Heart left ventricle (tissue), 16 donors: ENCODE measurements at regions of chr4 and their contacts with region 1.

Region 1: GRCh38 chr4:173990126-173990868 is 293.2 kb downstream of the FBXO8 start:
- DNase-seq: no peak
- ATAC-seq: peak; percentile 71 to 87 (median 83)
- H3K4me3 ChIP-seq: peak overlapping the region in 9 of 12 donors; percentile 2 to 37 (median 21)
- H3K27ac ChIP-seq: peak overlapping the region in 11 of 12 donors; percentile 29 to 75 (median 69)
- H3K4me1 ChIP-seq: peaks cover 0 to 19% (median 5%) of the 10 kb centered on the region in 12 donors
- H3K27me3 ChIP-seq: no peaks in the 10 kb centered on the region
- CTCF ChIP-seq: peak; percentile 28 to 66 (median 50)
- POLR2A ChIP-seq: no peak

Region 2: DNA sequence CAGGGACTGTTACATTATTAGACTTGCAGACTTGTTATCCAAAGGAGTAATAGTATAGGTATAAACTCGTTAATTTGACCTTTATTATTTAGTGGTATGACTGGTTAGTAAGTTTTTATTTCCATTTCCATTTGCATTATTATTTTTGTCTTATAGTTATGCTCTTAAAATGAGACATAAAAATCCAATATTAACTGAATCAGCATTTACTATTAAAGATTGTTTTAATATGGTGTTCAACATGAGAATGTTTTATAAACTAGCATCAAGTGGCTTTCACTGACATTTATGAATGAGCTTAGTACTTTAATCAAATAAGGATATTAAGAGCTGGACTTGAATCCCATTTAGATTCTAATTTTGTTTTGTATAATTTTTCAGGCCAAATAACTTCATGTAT is 232.2 kb before region 1 on chr4:
- intact Hi-C with region 1: loop called in 5 of 10 experiments (anchors 5 to 10 kb)
- DNase-seq: no peak
- ATAC-seq: no peak
- H3K4me3 ChIP-seq: no peak overlapping the region
- H3K27ac ChIP-seq: no peak overlapping the region
- H3K4me1 ChIP-seq: peaks cover 0 to 22% (median 0%) of the 10 kb centered on the region in 12 donors
- H3K27me3 ChIP-seq: no peaks in the 10 kb centered on the region
- CTCF ChIP-seq: no peak
- POLR2A ChIP-seq: no peak

Region 3: DNA sequence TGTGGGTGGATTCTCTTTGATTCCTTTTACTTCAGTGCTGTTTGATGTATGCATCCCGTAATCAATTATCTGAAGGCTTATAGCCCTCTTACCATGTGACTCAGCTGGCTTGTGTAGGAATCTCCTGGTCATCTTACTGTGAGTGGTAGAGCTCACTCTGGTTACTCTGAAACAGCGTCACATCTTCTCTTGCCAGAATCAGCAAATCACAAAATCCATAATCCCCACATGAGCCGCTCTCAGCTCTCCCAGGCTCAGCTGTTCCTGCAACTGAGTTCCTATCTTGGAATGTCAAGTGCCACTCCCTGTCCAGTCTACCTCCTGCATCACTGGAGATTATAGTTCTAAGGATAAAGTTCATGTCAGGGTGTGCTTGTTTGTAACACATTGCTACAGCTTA is 15.1 kb after region 1 on chr4:
- intact Hi-C with region 1: no loop called
- DNase-seq: no peak
- ATAC-seq: peak; percentile 34 to 84 (median 69)
- H3K4me3 ChIP-seq: no peak overlapping the region
- H3K27ac ChIP-seq: no peak overlapping the region
- H3K4me1 ChIP-seq: peaks cover 0 to 8% (median 0%) of the 10 kb centered on the region in 12 donors
- H3K27me3 ChIP-seq: no peaks in the 10 kb centered on the region
- CTCF ChIP-seq: no peak
- POLR2A ChIP-seq: no peak

Region 4: DNA sequence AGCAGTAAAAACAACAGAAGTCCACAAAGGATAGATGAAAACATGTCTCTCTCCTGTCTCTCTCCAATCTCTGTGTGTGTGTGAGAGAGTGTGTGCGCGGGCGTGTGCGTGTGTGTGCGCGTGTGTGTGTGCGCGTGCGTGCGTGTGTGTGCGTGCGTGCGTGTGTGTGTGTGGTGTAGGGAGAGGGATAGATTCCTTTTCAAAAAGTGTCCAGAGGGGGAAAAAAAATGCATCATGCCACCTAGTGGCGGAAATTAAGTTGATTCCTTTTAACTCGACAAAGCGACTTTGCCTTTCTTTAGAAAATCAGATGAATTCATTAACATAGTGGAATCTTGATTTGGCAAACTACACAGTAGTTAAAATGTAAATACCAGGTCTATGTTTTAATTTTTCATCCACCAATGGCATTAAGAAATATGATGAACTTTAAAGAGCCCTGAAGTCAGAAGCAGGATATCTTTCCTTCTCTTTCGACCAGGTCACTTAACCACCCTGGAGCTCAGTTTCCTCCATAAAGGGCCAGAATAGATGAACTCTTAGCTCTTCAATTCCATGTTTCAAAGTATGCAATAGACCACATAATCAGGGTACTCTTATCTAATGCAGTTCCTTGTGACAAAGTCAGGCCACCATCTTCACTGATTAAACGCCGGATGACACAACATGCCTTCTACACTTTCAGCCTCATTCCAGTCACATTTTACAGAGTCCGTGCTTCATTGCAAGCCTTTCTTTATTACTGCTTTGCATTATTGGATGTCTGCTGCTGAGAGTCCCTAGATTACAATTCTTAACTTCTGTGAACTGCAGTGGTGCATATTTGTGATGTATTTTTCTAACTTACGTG is 130.4 kb after region 1 on chr4:
- intact Hi-C with region 1: loop called in 3 of 10 experiments (anchors 2 to 10 kb)
- DNase-seq: peak; percentile 50 to 79 (median 53)
- ATAC-seq: peak; percentile 50 to 92 (median 80)
- H3K4me3 ChIP-seq: peak overlapping the region; percentile 16 to 59 (median 40)
- H3K27ac ChIP-seq: peak overlapping the region in 7 of 12 donors; percentile 6 to 74 (median 32)
- H3K4me1 ChIP-seq: peaks cover 0 to 22% (median 2%) of the 10 kb centered on the region in 12 donors
- H3K27me3 ChIP-seq: no peaks in the 10 kb centered on the region
- CTCF ChIP-seq: peak; percentile 28 to 64 (median 54)
- POLR2A ChIP-seq: no peak

Region 5: DNA sequence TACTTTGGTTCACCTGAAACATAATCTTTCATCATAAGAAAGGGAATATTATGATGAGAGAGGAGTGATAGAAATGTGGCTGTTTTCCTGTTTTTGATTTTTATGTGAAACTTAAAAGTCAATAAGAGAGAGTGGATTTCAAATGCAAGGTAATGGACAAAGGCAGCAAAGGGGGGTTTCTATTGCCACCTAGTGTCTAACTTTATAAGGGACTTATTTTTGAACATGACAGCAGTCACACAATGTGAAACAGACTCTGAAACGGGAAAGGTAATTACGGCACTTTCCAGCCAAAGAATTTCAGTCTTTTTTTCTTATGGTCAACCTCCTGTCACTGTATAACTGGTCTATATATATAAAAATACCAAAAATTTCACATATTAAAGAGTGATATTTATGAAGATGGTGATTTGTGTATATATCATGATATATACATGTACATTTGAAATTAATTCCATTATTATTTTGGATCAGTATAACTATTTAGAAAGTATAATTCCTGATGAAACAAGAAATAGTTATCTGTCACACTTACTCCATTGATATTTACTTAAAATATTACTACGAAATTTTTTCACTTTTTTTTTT is 166.0 kb after region 1 on chr4:
- intact Hi-C with region 1: loop called in 3 of 10 experiments (anchors 5 to 10 kb)
- DNase-seq: no peak
- ATAC-seq: peak; percentile 72 to 82 (median 78)
- H3K4me3 ChIP-seq: peak overlapping the region in 2 of 12 donors; percentile 13 to 32
- H3K27ac ChIP-seq: peak overlapping the region in 4 of 12 donors; percentile 19 to 79 (median 28)
- H3K4me1 ChIP-seq: peaks cover 0 to 19% (median 0%) of the 10 kb centered on the region in 12 donors
- H3K27me3 ChIP-seq: no peaks in the 10 kb centered on the region
- CTCF ChIP-seq: peak; percentile 46 to 76 (median 62)
- POLR2A ChIP-seq: no peak